Activated CD4-positive, alpha-beta T cell treated with anti-CD3 and anti-CD28 coated beads for 36 hours (primary cell): ENCODE measurements at regions of chr15 and their contacts with region 1.

Region 1: GRCh38 chr15:101251830-101252820 is at the start of gene CHSY1:
- DNase-seq: peak; percentile 91
- ATAC-seq: peak; percentile 61
- H3K4me3 Mint-ChIP-seq: peak within 1 kb of the TSS; percentile 85
- H3K27ac Mint-ChIP-seq: peak within 1 kb of the TSS; percentile 87
- H3K4me1 Mint-ChIP-seq: peaks cover 58% of the 10 kb centered on the region
- H3K27me3 Mint-ChIP-seq: no peaks in the 10 kb centered on the region
- total RNA-seq, gene CHSY1: 31.5 to 36.1 TPM

Region 2: DNA sequence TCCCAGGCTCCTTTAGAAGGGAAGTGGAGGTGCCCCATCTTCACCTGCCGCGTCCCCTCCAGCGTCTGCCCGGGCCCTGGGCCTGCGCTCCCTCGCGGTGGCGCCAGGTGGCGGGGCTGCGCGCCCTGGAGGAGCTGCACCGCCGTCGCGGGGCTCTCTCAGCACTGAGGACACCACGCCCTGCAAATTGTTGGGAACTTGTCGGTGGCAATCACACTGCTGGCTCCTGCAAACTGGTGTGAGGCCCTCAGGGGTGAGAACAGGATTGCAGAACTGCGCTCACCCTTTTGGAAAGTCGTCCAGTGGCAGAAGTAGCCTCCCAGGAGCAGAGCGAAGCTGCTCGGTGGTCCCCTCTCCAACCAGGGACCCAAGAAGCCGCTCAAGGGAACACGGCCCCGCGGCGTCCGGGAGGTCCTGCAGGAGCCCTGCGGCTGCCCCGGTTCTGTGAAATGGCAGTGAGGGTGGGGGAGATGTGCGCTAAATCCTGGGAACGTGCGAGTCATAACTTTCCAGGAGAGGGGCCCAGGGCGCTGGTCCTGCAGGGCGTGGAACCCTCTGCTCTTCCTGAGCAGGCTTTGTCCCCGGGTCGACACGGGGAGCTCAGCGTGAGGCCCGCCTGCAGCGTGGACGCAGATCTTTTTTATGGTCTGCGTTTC is 334.0 kb before region 1 on chr15:
- CTCF ChIA-PET with region 1: interaction called, 4 read pairs
- POLR2A ChIA-PET with region 1: no interaction called
- intact Hi-C with region 1: loop called (anchors 5 to 10 kb)
- DNase-seq: peak; percentile 84
- ATAC-seq: peak; percentile 94
- H3K4me3 Mint-ChIP-seq: peak overlapping the region; percentile 66
- H3K27ac Mint-ChIP-seq: peak overlapping the region; percentile 0
- H3K4me1 Mint-ChIP-seq: peaks cover 15% of the 10 kb centered on the region
- H3K27me3 Mint-ChIP-seq: peaks cover 55% of the 10 kb centered on the region

Region 3: DNA sequence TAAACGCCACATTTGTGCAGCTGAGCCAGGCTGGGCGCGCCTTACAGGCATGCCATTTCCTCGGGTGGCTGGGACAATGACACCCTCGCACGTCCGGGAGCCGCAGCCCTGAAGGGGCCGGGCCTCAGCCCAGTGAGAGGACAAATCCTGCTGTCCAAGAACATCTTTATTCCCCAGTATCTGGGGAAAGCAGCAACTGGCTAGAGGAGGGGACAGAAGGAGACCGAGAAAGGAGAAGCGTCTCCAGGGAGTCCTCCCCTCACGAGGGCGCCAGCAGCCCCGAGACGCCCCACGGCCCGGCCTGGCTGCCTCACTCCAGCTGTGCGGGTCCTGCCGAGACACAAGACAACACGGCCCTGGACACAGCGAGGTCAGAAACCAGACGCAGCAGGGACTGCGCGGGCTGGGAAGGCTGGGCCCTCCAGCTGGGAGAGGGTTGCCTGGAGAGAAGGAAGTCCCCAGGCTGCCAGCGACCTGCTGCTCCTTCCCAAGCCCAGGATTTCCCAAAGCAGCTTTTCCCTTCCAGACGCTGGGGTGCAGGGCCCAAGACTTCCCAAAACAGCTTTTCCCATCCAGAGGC is 130.5 kb before region 1 on chr15:
- CTCF ChIA-PET with region 1: interaction called, 3 read pairs
- POLR2A ChIA-PET with region 1: interaction called, 3 read pairs
- intact Hi-C with region 1: loop called (anchors 1 to 2 kb)
- DNase-seq: peak; percentile 77
- ATAC-seq: peak; percentile 79
- H3K4me3 Mint-ChIP-seq: peak overlapping the region; percentile 58
- H3K27ac Mint-ChIP-seq: peak overlapping the region; percentile 84
- H3K4me1 Mint-ChIP-seq: peaks cover 37% of the 10 kb centered on the region
- H3K27me3 Mint-ChIP-seq: no peaks in the 10 kb centered on the region

Region 4: DNA sequence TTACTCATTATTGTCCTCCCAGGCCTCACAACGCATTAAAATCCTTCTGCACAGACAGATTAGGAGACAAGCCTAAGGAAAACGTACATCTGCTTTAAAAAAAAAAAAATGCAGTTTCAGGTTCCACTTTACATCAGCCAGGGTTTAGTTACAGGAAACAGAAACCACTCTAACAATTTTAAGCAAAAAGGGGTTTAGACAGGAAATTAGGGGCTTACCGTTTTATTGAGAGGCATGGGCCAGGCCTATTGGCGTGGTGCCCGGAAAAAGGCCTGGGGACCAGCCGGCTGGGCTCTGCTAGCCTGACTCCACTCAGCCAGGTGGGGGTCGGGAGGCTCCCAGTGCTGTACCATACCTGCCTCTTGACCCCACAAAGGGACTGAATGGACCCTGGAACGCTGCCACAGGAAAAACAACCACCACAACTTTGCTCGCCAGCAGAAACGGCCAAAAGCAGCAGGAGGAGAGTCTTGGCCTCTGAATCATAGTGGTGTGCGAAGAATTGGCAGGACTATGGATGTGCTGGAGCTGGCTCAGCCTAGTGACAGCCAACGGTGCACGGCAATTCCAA is 124.5 kb before region 1 on chr15:
- CTCF ChIA-PET with region 1: interaction called, 3 read pairs
- POLR2A ChIA-PET with region 1: interaction called, 4 read pairs
- intact Hi-C with region 1: loop called (anchors 2 kb)
- DNase-seq: peak; percentile 66
- ATAC-seq: peak; percentile 82
- H3K4me3 Mint-ChIP-seq: peak overlapping the region; percentile 51
- H3K27ac Mint-ChIP-seq: peak overlapping the region; percentile 95
- H3K4me1 Mint-ChIP-seq: peaks cover 52% of the 10 kb centered on the region
- H3K27me3 Mint-ChIP-seq: no peaks in the 10 kb centered on the region

Region 5: DNA sequence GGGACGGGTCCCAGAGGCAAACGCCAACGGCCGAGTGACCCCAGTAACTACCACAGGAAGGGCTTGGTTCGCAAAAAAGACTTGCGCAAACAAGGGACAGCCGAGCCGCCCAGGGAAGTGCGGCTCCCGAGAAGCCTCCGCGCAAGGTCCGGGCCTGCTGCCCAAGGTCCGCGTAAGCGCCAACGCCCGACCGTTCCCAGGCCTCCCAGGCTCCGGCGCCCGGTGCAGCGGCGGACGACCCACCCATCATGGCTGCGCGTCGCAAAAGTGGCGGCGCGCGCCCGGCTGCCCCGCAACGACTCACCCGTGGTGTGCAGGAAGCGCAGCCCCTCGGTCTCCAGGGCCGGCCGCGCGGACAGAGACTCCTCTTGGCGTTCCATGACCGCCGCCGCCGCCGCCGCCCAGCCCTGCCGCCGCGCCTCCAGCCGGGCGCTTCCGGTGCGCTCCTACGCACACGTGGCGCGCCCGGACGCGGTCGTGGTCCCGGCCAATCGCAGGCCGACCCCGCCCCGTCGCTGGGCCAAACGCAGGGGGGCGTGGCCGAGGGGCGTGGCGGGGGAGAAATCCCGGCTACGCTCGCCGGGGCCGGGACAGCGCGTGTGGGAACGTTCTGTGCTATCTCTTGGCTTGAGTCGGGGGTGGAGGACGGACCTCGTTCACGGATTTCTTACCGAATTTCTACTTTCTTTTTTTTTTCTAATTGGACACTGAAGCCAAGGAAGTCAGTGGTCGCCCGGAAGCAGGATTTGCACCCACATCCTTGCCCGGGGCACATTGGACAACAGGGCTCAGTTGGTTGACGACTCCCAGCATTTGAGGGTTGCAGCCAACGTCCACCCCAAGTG is 25.1 kb after region 1 on chr15 and contains the start of gene SELENOS:
- CTCF ChIA-PET with region 1: interaction called, 3 read pairs
- POLR2A ChIA-PET with region 1: interaction called, 3 read pairs
- intact Hi-C with region 1: loop called (anchors 1 to 2 kb)
- DNase-seq: peak; percentile 93
- ATAC-seq: peak; percentile 92
- H3K4me3 Mint-ChIP-seq: peak within 1 kb of the TSS; percentile 89
- H3K27ac Mint-ChIP-seq: peak within 1 kb of the TSS; percentile 79
- H3K4me1 Mint-ChIP-seq: peaks cover 24% of the 10 kb centered on the region
- H3K27me3 Mint-ChIP-seq: no peaks in the 10 kb centered on the region
- total RNA-seq, gene SELENOS: 14.5 to 20.8 TPM